Tibial artery (tissue), 4 donors: ENCODE measurements at regions of chr19 and their contacts with region 1.

Region 1: GRCh38 chr19:54137086-54137921 is at the start of gene CNOT3:
- DNase-seq: peak; percentile 99 to 100
- H3K4me3 ChIP-seq: peak within 1 kb of the TSS; percentile 83 to 99
- H3K27ac ChIP-seq: peak within 1 kb of the TSS; percentile 99
- H3K4me1 ChIP-seq: peaks cover 0 to 42% (median 34%) of the 10 kb centered on the region in 4 donors
- H3K27me3 ChIP-seq: no peaks in the 10 kb centered on the region
- CTCF ChIP-seq: peak in 1 of 2 experiments; percentile 20

Region 2: DNA sequence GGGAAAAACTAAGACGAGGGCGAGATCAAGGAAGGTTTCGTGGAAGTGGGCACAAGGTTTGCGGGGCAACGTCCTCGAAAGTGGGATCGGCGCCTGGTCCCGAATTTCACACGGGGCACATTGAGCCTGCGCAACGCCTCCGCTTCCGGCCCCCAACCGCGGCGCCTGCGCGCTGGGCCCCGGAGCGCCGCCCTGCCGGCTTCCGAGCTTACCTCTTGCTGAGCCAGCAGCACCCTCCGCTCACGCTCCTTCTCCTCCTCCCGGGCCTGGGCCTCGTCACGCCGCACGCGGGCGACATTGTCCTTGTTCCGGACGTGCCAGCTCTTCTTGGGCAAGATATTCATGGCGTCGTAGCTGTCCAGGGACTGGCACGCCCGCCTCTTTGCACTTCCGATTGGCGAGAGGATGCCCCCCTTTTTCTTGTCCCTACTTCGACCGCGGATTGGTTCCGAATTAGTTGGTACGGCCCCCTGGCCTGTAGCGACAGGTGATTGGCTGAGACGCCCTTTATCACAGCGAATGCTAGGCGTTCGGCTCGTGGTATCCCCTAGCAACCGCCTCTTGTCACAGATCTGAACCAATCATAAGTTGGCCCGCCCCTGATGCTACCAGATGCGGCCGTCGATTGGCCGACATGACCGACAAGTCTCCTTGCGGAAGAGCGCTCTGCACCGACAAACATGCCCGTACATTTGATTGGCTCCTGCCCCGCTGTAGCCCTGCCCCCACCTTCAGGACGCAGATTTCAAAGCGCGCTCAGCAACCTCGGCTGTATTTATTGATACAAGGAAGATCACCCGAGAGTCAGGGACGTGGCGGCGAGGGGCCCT is 22.3 kb after region 1 on chr19 and contains the start of gene LENG1:
- intact Hi-C with region 1: loop called (anchors 2 kb)
- DNase-seq: peak; percentile 100
- H3K4me3 ChIP-seq: peak within 1 kb of the TSS; percentile 63 to 64
- H3K27ac ChIP-seq: peak within 1 kb of the TSS; percentile 90 to 93
- H3K4me1 ChIP-seq: peaks cover 0 to 42% (median 28%) of the 10 kb centered on the region in 4 donors
- H3K27me3 ChIP-seq: peaks cover 0 to 20% of the 10 kb centered on the region in 2 donors
- CTCF ChIP-seq: peak; percentile 22 to 37

Region 3: GRCh38 chr19:54231077-54231931 is 94.0 kb after region 1 on chr19:
- intact Hi-C with region 1: no loop called
- DNase-seq: peak; percentile 78 to 86
- H3K4me3 ChIP-seq: no peak overlapping the region
- H3K27ac ChIP-seq: no peak overlapping the region
- H3K4me1 ChIP-seq: no peaks in the 10 kb centered on the region
- H3K27me3 ChIP-seq: peaks cover 0 to 22% of the 10 kb centered on the region in 2 donors
- CTCF ChIP-seq: peak; percentile 80 to 84